Breast epithelium (tissue), 4 donors: ENCODE measurements at regions of chr11 and their contacts with region 1.

Region 1: DNA sequence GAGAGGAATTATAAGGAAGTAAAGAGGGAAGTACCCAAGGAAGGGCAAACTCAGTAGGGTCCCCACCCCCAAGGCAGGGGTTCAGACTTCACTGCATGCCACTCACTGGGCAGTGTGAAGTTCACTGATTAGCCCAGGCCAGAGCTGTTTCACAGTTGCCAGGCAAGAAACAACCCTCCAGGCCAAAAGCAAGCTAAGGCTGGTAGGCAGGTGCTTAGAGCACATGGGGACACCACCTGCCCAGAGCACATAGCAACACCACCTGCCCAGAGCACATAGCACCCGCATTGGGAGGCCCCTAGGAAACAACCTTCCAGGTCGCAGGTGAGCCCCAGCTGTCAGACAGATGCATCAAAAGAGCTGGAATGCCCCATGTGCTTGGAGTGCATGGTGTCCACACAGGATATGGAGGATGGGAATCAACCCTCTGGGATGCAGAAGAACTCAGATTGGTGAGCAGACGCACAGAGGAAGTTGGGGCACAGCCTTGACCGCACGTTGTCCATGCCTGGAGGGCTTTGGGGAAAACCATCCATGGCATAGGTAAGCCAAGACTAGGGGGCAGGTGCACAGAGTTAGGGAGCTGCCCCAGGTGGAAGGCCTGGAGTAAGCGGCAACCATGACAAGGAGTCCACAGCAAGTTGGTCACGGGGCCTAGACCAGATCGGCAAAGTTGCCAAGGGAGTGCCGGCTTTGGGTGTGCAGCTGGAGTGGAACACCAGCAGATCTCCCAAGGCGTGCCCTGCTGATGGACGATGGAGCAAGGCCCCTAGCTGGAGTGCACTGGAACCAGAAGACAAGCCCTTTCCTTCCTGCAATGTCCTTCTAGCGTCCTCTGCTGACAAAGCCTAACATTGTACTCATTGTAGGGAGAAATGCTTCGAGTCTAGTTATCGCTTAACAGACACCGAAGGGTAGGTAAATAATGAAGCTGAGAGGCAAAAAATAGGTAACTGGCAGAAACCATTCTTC is 7.8 kb upstream of the TMEM216 start:
- DNase-seq: no peak
- H3K4me3 ChIP-seq: no peak overlapping the region
- H3K27ac ChIP-seq: no peak overlapping the region
- H3K4me1 ChIP-seq: no peaks in the 10 kb centered on the region
- H3K27me3 ChIP-seq: no peaks in the 10 kb centered on the region
- CTCF ChIP-seq: no peak
- POLR2A ChIP-seq: no peak

Region 2: DNA sequence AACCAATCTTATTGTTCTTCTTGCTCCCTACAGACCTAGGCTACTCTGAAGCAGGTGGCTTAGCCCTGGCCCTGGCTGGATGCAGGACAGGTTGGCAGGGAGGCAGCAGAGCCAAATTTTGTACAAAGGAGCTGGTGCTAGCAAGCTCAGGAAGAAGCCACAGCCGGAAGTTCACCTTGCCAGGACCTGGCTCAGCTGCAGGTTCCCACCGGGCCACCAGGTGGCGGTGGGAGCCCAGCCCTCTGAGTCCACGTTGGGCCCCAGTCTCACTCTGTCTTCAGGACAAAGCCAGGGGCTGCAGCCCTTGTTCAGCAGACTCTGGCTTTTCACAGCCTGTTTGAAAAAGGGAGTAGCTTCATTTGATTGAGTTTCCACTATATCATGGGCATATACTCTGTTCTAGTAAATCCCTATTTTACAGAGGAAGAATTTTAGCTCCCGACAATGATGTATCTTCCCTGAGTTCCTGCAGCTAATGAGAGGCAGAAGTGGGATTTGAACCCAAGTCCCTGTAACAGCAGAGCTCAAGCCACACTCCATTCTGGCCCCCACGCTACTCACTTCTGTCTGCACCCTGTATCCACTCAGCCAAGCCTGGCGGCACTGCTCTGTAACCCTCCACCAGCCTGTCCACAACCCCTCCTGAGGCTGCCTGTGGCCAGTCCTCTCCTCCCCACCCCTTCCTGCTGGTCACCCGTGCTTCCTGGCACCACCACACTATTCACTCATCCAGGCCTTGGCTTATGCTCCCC is 48.2 kb before region 1 on chr11:
- intact Hi-C with region 1: loop called (anchors 5 kb)
- DNase-seq: peak; percentile 81 to 86
- H3K4me3 ChIP-seq: no peak overlapping the region
- H3K27ac ChIP-seq: peak overlapping the region; percentile 72 to 96
- H3K4me1 ChIP-seq: peaks cover 14 to 15% of the 10 kb centered on the region in 2 donors
- H3K27me3 ChIP-seq: no peaks in the 10 kb centered on the region
- CTCF ChIP-seq: peak; percentile 94 to 98 (median 98)
- POLR2A ChIP-seq: no peak